ENCODE measurements at regions of chr7 and their contacts with region 1.

Region 1: DNA sequence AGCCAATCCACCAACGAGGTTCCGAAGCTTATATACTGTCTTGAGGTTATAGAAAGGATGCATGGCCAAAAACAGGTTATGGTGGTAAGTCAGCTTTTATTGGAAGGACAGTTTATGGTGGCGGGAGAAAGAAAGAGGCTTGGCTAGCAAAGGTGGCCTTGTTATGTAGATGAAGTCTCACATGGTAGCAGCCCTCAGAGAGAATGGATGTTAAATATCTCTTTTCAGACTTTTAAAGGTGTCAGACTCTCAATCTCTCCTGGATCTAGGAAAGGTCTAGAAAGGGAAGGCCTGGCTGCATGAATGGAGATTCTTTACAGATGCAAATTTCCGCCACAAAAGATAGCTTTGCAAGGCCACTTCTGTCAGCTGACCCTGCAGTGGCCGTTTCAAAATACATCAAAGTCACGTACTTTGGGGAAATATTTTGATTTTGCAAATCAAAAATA is 333.8 kb downstream of the GALNT17 start:
- DNase-seq: no peak

Region 2: GRCh38 chr7:71612911-71613310 is 147.1 kb after region 1 on chr7:
- intact Hi-C with region 1: loop called (anchors 10 kb)
- DNase-seq: no peak

Region 3: GRCh38 chr7:71746006-71746405 is 280.2 kb after region 1 on chr7:
- intact Hi-C with region 1: no loop called
- DNase-seq: no peak